ENCODE measurements at regions of chr16 and their contacts with region 1.

Region 1: GRCh38 chr16:81077076-81077940 is at the start of gene C16orf46:
- DNase-seq: peak; percentile 98
- H3K4me3 Mint-ChIP-seq: peak within 1 kb of the TSS; percentile 24
- H3K27ac Mint-ChIP-seq: no peak within 1 kb of the TSS
- H3K4me1 Mint-ChIP-seq: peaks cover 21% of the 10 kb centered on the region
- H3K27me3 Mint-ChIP-seq: peaks cover 2% of the 10 kb centered on the region
- total RNA-seq, gene C16orf46: 0.73 TPM in 1 of 2 experiments, not detected in the other

Region 2: GRCh38 chr16:81006814-81007696 is 70.3 kb before region 1 on chr16 and contains the starts of genes CENPN and CMC2:
- CTCF ChIA-PET with region 1: interaction called, 4 read pairs
- POLR2A ChIA-PET with region 1: interaction called, 11 read pairs
- DNase-seq: peak; percentile 98
- H3K4me3 Mint-ChIP-seq: peak within 1 kb of the TSS; percentile 95
- H3K27ac Mint-ChIP-seq: peak within 1 kb of the TSS; percentile 100
- H3K4me1 Mint-ChIP-seq: peaks cover 58% of the 10 kb centered on the region
- H3K27me3 Mint-ChIP-seq: no peaks in the 10 kb centered on the region
- total RNA-seq, gene CENPN: 62.2 to 66.9 TPM
- total RNA-seq, gene CMC2: 90.7 to 99.9 TPM

Region 3: DNA sequence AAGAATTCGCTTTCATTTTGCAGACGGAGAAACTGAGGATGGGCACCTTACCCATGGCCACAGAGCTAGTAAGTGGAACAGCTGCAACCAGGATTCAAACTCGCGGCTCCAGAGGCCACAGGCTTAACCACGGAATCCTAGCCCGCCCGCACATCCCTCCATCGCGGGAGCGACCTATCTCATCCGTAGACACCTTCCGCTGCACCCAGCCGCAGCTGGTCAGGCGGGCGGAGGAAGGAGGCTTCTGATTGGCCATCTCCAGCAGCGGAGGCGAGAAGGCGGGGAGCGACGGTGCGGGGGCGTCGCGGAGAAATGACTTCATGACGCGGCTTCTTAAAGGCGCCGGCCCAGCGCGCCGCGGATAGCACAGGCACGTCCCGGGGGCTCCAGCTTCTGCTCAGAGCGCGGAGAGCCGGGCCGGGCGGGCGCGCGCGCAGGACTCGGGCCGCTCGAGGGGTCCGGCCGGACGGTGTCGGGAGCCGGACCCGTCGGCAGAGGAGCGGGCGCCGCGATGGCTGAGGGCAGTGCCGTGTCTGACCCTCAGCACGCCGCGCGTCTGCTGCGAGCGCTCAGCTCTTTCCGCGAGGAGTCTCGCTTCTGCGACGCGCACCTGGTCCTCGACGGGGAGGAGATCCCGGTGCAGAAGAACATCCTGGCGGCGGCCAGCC is 237.4 kb after region 1 on chr16 and contains the start of gene GAN:
- CTCF ChIA-PET with region 1: interaction called, 4 read pairs
- POLR2A ChIA-PET with region 1: interaction called, 10 read pairs
- DNase-seq: peak; percentile 96
- H3K4me3 Mint-ChIP-seq: peak within 1 kb of the TSS; percentile 84
- H3K27ac Mint-ChIP-seq: peak within 1 kb of the TSS; percentile 76
- H3K4me1 Mint-ChIP-seq: peaks cover 45% of the 10 kb centered on the region
- H3K27me3 Mint-ChIP-seq: no peaks in the 10 kb centered on the region
- total RNA-seq, gene GAN: 8.4 to 8.9 TPM

Measured in activated CD4-positive, alpha-beta memory T cell treated with anti-CD3 and anti-CD28 coated beads, Interleukin-2, amount 10 ng/mL, durations not matched to agents 7 days and 5 days (primary cell).